ENCODE measurements at regions of chr1 and their contacts with region 1.

Region 1: DNA sequence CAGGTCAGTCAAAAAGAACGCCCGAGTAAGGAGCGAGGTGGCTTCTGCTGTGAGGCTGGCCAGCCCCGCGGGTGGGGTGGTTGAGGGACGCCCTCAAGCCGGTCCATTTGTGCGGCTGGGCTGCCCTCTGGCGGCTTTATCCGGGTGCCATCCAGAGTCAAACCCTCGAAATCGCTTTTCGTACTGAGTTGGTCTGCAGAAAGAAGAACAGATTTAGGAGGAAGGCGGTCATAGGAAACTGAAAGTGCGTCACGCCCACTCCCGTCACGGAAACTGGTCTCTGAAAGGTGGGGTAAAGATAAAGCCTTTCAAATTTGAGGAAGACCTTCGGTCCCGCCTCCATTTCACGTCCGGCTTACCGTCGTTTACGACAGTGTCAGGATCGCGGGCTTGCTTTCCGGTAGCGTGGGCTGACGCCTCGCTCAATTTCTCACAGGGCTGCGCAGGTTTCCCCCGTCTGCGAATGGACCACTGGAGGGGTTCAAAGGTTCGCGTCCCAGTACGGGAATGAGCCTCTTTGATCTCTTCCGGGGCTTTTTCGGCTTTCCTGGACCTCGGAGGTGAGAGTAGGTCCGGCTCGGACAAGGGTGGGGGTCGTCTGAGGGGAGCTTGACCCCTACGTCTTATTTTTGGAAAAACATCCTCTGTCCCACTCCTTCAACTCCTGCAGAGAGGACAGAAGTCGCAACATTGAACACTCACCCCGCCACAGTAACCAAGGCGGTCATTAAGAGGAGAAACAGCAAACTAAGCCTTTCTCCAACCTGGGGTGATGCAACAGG is at the start of gene HAX1:
- DNase-seq: peak; percentile 98
- H3K4me3 Mint-ChIP-seq: peak within 1 kb of the TSS; percentile 91
- H3K27ac Mint-ChIP-seq: peak within 1 kb of the TSS; percentile 96
- H3K4me1 Mint-ChIP-seq: peaks cover 29% of the 10 kb centered on the region
- H3K27me3 Mint-ChIP-seq: no peaks in the 10 kb centered on the region
- CTCF ChIP-seq: peak; percentile 96
- total RNA-seq, gene HAX1: 261 and 295 TPM in 2 replicates

Region 2: DNA sequence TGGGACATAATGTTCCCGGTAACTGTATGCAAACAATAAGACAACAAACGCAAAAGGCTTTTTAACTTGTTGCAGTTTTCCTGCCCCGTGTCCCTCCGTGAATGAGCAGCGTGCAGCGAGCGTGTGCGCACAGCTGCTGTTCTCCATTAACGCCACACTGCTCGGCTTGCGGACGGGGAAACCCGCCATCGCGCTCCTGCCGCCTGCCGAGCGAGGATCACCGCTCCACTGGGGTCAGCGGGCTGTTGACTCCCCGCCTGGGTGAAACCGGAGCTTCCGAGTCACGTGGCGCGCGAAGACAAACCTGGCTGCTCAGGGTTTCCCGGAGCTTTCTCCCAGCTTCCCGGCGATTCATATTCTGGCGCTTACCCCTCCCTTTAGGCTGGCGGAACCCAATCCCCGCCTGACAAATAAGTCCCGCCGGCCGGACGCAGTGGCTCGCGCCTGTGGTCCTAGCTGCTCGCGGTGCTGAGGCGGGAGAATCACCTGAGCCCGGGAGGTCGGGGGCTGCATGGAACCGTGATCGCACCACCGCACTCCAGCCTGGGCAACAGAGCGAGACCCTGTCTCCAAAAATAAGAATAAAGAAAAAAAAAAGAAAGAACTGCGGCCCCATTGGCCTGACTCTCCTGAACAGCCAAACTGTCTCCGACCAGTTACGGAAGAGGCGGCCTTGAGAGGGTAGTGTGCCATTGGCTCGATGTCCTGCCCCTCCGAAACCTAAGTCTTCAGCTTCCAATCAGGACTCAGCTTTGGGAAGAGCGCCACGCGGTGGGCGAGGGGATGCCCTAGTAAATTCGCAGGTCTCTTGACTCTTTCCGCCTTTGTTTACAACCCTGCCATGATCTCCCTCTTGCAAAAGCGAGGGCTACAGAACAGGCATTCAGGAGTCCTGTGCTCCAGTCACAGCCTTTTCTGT is 305.1 kb before region 1 on chr1 and contains the start of gene CREB3L4:
- CTCF ChIA-PET with region 1: no interaction called
- POLR2A ChIA-PET with region 1: no interaction called
- intact Hi-C with region 1: loop called (anchors 5 kb)
- DNase-seq: peak; percentile 100
- H3K4me3 Mint-ChIP-seq: peak within 1 kb of the TSS; percentile 95
- H3K27ac Mint-ChIP-seq: peak within 1 kb of the TSS; percentile 94
- H3K4me1 Mint-ChIP-seq: peaks cover 40% of the 10 kb centered on the region
- H3K27me3 Mint-ChIP-seq: no peaks in the 10 kb centered on the region
- CTCF ChIP-seq: peak; percentile 32
- total RNA-seq, gene CREB3L4: 14.7 and 17.6 TPM in 2 replicates

Region 3: DNA sequence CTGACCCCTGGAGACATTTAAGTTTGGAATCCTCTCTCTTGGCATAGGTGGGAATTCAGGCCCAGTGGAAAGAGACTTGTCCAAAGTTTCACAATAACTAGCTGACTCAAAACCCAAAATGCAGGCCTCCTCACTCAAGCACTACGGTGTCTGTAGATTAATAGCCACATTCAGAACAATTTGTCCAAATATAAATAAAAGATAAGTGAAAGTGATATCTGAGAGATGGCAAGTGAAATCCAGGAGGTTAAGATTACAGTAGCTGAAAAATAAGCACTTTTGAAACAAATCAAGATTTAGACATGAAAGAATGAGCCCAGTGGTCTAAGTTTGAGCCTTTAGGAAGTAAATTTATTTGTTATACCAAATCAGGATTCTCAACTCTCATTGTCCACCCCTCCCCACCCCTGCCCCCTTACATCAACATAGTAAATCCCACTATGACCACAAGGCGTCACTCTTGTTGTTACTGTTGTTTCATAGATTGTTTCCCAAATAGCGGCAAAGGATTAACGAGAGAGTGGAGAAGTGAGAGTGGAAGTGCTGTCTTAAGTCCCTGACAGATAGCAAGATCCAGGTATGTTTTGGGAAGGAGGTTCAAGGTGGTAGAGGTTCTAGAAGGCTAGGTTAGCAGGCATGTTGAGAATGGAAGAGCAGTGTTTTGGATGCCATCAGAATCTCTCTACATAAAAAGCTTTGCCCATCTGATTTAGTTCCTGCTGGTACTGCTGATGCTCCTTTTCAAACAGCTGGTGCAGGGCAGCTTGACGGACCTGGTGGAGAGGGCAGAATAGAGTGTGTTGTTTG is 73.4 kb before region 1 on chr1:
- CTCF ChIA-PET with region 1: interaction called, 13 read pairs
- POLR2A ChIA-PET with region 1: interaction called, 10 read pairs
- intact Hi-C with region 1: no loop called
- DNase-seq: peak; percentile 80
- H3K4me3 Mint-ChIP-seq: no peak overlapping the region
- H3K27ac Mint-ChIP-seq: no peak overlapping the region
- H3K4me1 Mint-ChIP-seq: peaks cover 12% of the 10 kb centered on the region
- H3K27me3 Mint-ChIP-seq: no peaks in the 10 kb centered on the region
- CTCF ChIP-seq: peak; percentile 45

Region 4: GRCh38 chr1:154256686-154257085 is 15.7 kb before region 1 on chr1:
- CTCF ChIA-PET with region 1: interaction called, 10 read pairs
- POLR2A ChIA-PET with region 1: interaction called, 20 read pairs
- intact Hi-C with region 1: no loop called
- DNase-seq: no peak
- H3K4me3 Mint-ChIP-seq: no peak overlapping the region
- H3K27ac Mint-ChIP-seq: no peak overlapping the region
- H3K4me1 Mint-ChIP-seq: no peaks in the 10 kb centered on the region
- H3K27me3 Mint-ChIP-seq: no peaks in the 10 kb centered on the region
- CTCF ChIP-seq: no peak

Region 5: GRCh38 chr1:154335025-154335714 is 62.8 kb after region 1 on chr1:
- CTCF ChIA-PET with region 1: interaction called, 34 read pairs
- POLR2A ChIA-PET with region 1: interaction called, 17 read pairs
- intact Hi-C with region 1: no loop called
- DNase-seq: peak; percentile 94
- H3K4me3 Mint-ChIP-seq: no peak overlapping the region
- H3K27ac Mint-ChIP-seq: no peak overlapping the region
- H3K4me1 Mint-ChIP-seq: peaks cover 5% of the 10 kb centered on the region
- H3K27me3 Mint-ChIP-seq: no peaks in the 10 kb centered on the region
- CTCF ChIP-seq: peak; percentile 87

Measured in MCF 10A (cell line).